ENCODE measurements at regions of chr2 and their contacts with region 1.

Region 1: GRCh38 chr2:73212448-73213176 is 1.4 kb upstream of the SMYD5 start:
- DNase-seq: peak; percentile 64
- ATAC-seq: peak; percentile 60
- H3K4me3 Mint-ChIP-seq: peak overlapping the region; percentile 49
- H3K27ac Mint-ChIP-seq: no peak overlapping the region
- H3K4me1 Mint-ChIP-seq: peaks cover 32% of the 10 kb centered on the region
- H3K27me3 Mint-ChIP-seq: peaks cover 14% of the 10 kb centered on the region
- CTCF ChIP-seq: no peak

Region 2: GRCh38 chr2:72770879-72771461 is 441.6 kb before region 1 on chr2:
- CTCF ChIA-PET with region 1: interaction called, 4 read pairs
- POLR2A ChIA-PET with region 1: no interaction called
- intact Hi-C with region 1: loop called (anchors 2 kb)
- DNase-seq: no peak
- ATAC-seq: peak; percentile 52
- H3K4me3 Mint-ChIP-seq: no peak overlapping the region
- H3K27ac Mint-ChIP-seq: no peak overlapping the region
- H3K4me1 Mint-ChIP-seq: no peaks in the 10 kb centered on the region
- H3K27me3 Mint-ChIP-seq: no peaks in the 10 kb centered on the region
- CTCF ChIP-seq: peak; percentile 98

Region 3: GRCh38 chr2:72993147-72993932 is 219.3 kb before region 1 on chr2:
- CTCF ChIA-PET with region 1: interaction called, 11 read pairs
- POLR2A ChIA-PET with region 1: no interaction called
- intact Hi-C with region 1: loop called (anchors 1 kb)
- DNase-seq: peak; percentile 27
- ATAC-seq: peak; percentile 71
- H3K4me3 Mint-ChIP-seq: no peak overlapping the region
- H3K27ac Mint-ChIP-seq: no peak overlapping the region
- H3K4me1 Mint-ChIP-seq: no peaks in the 10 kb centered on the region
- H3K27me3 Mint-ChIP-seq: no peaks in the 10 kb centered on the region
- CTCF ChIP-seq: peak; percentile 81

Region 4: GRCh38 chr2:73006969-73007710 is 205.5 kb before region 1 on chr2:
- CTCF ChIA-PET with region 1: no interaction called
- POLR2A ChIA-PET with region 1: no interaction called
- intact Hi-C with region 1: no loop called
- DNase-seq: no peak
- ATAC-seq: no peak
- H3K4me3 Mint-ChIP-seq: no peak overlapping the region
- H3K27ac Mint-ChIP-seq: no peak overlapping the region
- H3K4me1 Mint-ChIP-seq: no peaks in the 10 kb centered on the region
- H3K27me3 Mint-ChIP-seq: no peaks in the 10 kb centered on the region
- CTCF ChIP-seq: no peak

Region 5: DNA sequence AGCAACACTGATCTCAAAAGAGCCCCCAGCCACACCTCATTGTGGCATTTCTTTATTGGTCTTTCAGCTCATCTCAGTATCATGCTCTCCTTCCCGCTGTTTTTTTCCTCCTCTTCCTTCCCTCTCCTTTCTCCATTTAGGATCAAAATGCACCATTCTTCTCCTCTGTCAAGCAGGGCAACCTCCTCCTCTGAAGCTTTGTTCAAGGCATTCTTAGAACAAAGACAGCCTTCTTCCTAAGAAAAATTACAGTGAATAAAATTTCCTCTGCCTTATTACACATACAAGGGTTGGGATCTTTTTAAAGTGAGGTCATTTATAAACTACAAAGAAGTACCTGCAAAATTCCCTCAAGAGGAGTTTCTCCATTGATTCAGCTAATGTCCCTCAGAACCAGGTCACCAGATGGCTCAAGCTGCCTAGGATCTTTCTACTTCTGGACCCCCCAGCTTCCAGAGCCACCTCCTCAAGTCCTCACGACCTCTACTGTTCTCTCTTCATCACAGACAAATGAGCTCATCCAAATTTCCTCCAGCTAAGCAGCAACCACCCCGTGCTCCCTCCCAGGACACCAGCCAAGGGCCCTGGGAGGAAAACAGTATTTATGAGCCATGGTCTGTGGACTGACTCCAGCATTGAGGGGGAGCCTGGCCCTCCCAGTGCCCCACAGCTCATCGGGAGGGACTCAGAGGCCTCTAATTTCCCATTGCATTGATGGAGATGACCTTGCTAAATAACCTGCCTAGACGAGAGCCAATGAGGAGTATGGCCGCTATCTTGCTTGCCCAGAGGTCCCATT is 159.1 kb before region 1 on chr2:
- CTCF ChIA-PET with region 1: no interaction called
- POLR2A ChIA-PET with region 1: no interaction called
- intact Hi-C with region 1: no loop called
- DNase-seq: no peak
- ATAC-seq: no peak
- H3K4me3 Mint-ChIP-seq: no peak overlapping the region
- H3K27ac Mint-ChIP-seq: no peak overlapping the region
- H3K4me1 Mint-ChIP-seq: no peaks in the 10 kb centered on the region
- H3K27me3 Mint-ChIP-seq: no peaks in the 10 kb centered on the region
- CTCF ChIP-seq: no peak

Region 6: DNA sequence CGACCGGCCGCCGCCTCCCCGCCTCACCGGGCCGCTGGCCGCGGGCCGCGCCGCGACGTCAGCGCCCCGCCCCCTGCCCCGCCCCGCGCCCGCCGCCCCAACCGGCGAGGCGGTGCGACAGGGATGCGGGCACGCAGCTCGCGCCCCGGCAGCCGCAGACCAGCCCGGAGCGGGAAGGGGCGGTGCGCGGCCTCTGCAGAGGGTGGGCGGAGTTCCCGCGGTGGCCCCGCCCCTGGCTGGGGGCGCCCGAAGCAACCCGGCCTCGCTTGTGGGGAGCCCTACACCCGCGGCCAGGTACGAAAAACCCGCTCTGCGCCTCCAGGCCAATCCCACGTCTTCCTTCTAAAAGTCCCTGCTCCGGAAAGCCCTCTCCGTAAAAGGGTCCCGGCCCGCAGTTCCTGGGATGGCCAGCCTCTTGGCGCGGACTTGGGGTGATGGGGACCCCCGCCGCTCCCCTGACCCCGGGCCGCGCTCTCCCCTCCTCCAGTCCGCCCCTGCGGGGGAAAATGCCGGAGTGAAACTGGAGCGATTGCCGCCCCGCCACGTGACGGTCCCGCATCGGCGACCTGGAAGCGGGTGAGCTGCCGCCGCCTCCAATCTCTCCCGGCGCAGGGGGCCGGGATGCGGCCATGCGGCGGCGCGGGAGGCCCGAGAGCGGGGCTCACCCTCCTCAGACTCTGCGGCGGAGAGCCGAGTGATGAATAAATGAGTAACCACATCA is 99.5 kb before region 1 on chr2 and contains the start of gene RAB11FIP5:
- CTCF ChIA-PET with region 1: no interaction called
- POLR2A ChIA-PET with region 1: no interaction called
- intact Hi-C with region 1: loop called (anchors 1 kb)
- DNase-seq: peak; percentile 75
- ATAC-seq: peak; percentile 91
- H3K4me3 Mint-ChIP-seq: peak within 1 kb of the TSS; percentile 77
- H3K27ac Mint-ChIP-seq: peak within 1 kb of the TSS; percentile 59
- H3K4me1 Mint-ChIP-seq: peaks cover 11% of the 10 kb centered on the region
- H3K27me3 Mint-ChIP-seq: no peaks in the 10 kb centered on the region
- CTCF ChIP-seq: no peak
- total RNA-seq, gene RAB11FIP5: 3.2 and 3.5 TPM in 2 replicates

Region 7: GRCh38 chr2:73293534-73294171 is 81.0 kb after region 1 on chr2 and contains the start of gene EGR4:
- CTCF ChIA-PET with region 1: interaction called, 12 read pairs
- POLR2A ChIA-PET with region 1: no interaction called
- intact Hi-C with region 1: loop called (anchors 1 kb)
- DNase-seq: peak; percentile 68
- ATAC-seq: peak; percentile 87
- H3K4me3 Mint-ChIP-seq: peak within 1 kb of the TSS; percentile 77
- H3K27ac Mint-ChIP-seq: no peak within 1 kb of the TSS
- H3K4me1 Mint-ChIP-seq: peaks cover 28% of the 10 kb centered on the region
- H3K27me3 Mint-ChIP-seq: peaks cover 41% of the 10 kb centered on the region
- CTCF ChIP-seq: no peak
- total RNA-seq, gene EGR4: 0.20 TPM in 1 of 2 replicates, not detected in the other

Measured in activated B cell treated with CpG ODN at 0.5 μM for 24 hours (primary cell).